Right cardiac atrium (tissue), 5 donors: ENCODE measurements at regions of chr6 and their contacts with region 1.

Region 1: DNA sequence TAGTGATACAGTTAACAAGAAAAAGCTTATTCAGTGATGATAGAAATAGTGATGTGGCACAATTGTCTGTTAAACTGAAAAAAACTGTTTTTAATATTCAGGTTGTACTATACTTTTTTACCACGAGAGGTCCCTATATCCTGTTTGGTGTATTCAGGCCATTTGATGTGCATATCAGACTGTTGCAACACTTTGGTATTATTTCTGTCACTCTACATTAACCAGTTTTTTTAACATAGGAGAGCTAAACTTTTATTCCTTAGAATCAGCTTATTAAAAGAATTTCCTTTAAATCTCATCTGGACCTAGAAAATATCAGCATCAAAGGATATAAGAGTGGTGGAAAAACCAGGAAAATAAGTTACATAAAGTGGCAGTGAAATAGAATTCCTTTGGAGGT is 36.8 kb downstream of the TSPYL4 start:
- DNase-seq: no peak
- ATAC-seq: peak; percentile 55 to 61
- H3K4me3 ChIP-seq: no peak overlapping the region
- H3K27ac ChIP-seq: no peak overlapping the region
- H3K4me1 ChIP-seq: peaks cover 3% of the 10 kb centered on the region
- H3K27me3 ChIP-seq: no peaks in the 10 kb centered on the region

Region 2: DNA sequence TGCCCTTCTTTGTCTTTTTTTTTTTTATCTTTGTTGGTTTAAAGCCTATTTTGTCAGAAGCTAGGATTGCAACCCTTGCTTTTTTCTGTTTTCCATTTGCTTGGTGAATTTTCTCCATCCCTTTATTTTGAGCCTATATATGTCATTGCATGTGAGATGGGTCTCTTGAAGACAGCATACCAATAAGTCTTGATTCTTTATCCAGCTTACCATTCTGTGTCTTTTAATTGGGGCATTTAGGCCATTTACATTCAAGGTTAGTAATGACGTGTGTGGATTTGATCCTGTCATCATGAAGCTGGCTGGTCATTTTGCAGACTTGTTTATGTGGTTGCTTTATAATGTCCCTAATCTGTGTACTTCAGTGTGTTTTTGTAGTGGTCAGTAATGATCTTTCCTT is 46.3 kb after region 1 on chr6:
- intact Hi-C with region 1: loop called in 1 of 4 experiments (anchors 5 kb)
- DNase-seq: no peak
- ATAC-seq: no peak
- H3K4me3 ChIP-seq: no peak overlapping the region
- H3K27ac ChIP-seq: no peak overlapping the region
- H3K4me1 ChIP-seq: no peaks in the 10 kb centered on the region
- H3K27me3 ChIP-seq: no peaks in the 10 kb centered on the region

Region 3: DNA sequence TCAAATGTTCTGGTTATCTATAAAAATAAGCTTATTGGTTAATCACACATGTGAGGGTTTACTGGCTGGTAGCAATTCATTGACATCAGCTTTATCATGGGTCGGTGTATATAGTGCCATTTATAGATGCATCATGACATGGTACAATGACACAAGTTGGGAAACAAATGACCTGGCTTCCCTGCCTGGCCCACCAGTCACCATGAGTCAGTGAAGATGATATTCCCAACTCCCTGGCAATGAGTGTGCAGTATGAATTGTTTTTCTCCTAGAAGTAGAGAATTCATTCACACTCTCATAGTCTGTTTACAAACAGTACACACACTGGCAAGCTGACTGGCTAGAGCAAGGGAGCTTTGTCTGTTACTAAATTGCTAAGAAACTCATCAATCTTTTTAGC is 206.9 kb after region 1 on chr6:
- intact Hi-C with region 1: no loop called
- DNase-seq: no peak
- ATAC-seq: no peak
- H3K4me3 ChIP-seq: no peak overlapping the region
- H3K27ac ChIP-seq: no peak overlapping the region
- H3K4me1 ChIP-seq: peaks cover 2% of the 10 kb centered on the region
- H3K27me3 ChIP-seq: no peaks in the 10 kb centered on the region